ENCODE measurements at regions of chr6 and their contacts with region 1.

Region 1: DNA sequence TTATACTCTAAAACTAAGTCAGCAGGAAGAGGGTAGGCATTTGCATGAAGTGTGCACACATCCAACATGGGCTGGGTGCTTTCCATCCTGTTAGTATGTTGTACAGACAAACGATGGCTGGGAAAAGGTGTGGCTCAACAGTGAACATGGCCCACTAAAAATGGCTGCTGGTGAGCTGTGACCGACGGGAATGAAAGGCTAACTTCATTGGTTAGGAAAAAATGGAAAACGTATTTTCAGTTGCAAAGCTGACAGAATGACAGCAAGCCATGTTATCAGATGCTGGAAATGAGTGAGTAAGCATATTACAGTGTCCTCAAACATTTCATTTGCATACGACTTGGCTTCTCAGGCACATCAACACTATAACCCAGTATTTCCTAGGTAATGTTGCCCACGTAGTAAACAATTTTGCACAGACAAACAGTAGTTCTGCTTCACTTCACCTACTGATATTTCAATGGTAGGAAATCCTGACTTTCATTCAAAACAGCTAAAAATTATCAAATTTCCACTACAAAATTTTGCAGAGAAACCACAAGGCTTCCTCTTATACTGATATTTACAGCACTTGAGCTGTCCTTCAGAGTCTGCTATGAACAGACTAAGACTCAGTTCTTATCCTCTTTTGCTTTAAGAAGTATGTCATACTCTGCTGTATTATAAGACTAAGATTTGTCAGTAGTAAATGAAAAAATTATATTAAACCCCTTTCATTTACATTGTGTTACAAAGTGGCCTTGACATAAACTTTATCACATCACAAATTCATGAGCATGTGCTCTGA is 98.9 kb downstream of the IRF4 start:
- DNase-seq: peak; percentile 65
- ATAC-seq: peak; percentile 50
- H3K4me3 Mint-ChIP-seq: peak overlapping the region; percentile 51
- H3K27ac Mint-ChIP-seq: peak overlapping the region; percentile 91
- H3K4me1 Mint-ChIP-seq: peaks cover 70% of the 10 kb centered on the region
- H3K27me3 Mint-ChIP-seq: no peaks in the 10 kb centered on the region

Region 2: DNA sequence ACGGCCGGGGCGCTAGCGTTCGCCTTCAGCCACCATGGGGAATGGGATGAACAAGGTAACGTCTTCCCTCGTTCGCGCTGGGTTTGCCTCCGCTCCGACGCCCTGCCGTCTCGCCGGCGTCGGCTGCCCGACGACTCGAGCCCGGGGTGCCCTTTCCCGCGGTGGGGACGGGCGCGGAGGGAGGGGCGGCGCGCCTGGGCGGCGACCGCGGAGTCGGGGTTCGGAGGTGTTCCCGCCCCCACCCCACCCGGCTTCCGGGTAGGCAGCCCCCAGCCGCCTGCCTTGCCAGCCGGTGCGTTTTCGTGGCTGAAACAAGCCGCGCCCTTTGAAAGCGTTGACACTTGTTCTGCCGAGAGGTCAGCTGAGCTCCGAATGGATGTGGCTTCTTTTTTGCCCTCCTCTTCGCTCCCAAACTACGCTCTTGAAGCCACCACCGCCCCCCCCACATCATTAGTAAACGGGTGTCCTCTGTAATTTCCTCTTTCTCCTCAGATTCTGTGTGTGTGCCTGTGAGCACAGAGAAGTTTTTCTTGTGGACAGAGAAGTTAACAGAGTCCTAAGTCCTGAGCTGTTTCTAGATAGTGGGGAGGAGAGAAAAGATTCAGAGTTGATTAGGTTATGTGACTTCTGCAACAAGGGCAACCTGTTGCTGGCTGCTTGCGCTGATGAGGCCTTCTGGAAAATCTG is 197.8 kb before region 1 on chr6:
- CTCF ChIA-PET with region 1: no interaction called
- DNase-seq: peak; percentile 92
- ATAC-seq: peak; percentile 55
- H3K4me3 Mint-ChIP-seq: peak overlapping the region; percentile 92
- H3K27ac Mint-ChIP-seq: peak overlapping the region; percentile 92
- H3K4me1 Mint-ChIP-seq: peaks cover 64% of the 10 kb centered on the region
- H3K27me3 Mint-ChIP-seq: no peaks in the 10 kb centered on the region

Region 3: GRCh38 chr6:379367-380181 is 110.9 kb before region 1 on chr6:
- CTCF ChIA-PET with region 1: no interaction called
- DNase-seq: no peak
- ATAC-seq: no peak
- H3K4me3 Mint-ChIP-seq: no peak overlapping the region
- H3K27ac Mint-ChIP-seq: no peak overlapping the region
- H3K4me1 Mint-ChIP-seq: peaks cover 32% of the 10 kb centered on the region
- H3K27me3 Mint-ChIP-seq: peaks cover 16% of the 10 kb centered on the region

Region 4: DNA sequence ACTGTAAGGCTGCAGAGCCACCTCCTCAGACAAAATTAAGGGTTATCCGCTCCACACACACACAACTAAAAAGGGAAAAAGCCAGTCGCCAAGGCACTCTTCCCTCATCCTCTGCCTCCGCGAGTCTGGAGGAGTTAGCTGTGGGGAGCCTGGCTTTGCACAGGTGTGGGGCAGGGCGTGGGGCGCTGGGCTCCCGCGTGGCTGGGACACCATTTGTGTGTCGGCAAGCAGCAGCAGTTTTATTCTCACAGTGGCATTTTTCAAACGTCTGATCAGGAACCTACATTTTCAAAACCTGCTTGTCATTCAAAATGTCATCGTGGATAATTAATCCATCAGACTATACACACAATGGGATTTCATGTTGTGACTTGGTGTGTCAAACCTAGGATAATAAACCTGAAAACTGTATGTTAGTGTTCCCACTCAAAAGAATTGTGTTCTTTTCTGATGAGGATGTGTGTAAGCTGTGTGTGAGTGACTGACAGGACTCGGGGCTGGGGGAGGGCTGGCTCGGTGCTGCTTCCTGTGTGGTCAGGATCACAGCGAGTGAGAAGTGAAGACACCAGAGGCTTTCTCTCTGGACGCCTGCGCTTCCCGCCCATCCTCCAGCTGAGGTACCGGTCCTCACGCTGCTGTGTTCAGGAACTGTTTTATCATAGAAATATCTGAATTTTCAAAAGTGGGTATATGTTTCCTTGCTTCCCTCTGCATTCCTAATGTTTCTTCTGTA is 15.8 kb before region 1 on chr6:
- CTCF ChIA-PET with region 1: interaction called, 20 read pairs
- DNase-seq: peak; percentile 94
- ATAC-seq: peak; percentile 99
- H3K4me3 Mint-ChIP-seq: peak overlapping the region; percentile 28
- H3K27ac Mint-ChIP-seq: peak overlapping the region; percentile 82
- H3K4me1 Mint-ChIP-seq: peaks cover 56% of the 10 kb centered on the region
- H3K27me3 Mint-ChIP-seq: peaks cover 14% of the 10 kb centered on the region